ENCODE measurements at regions of chr15 and their contacts with region 1.

Region 1: DNA sequence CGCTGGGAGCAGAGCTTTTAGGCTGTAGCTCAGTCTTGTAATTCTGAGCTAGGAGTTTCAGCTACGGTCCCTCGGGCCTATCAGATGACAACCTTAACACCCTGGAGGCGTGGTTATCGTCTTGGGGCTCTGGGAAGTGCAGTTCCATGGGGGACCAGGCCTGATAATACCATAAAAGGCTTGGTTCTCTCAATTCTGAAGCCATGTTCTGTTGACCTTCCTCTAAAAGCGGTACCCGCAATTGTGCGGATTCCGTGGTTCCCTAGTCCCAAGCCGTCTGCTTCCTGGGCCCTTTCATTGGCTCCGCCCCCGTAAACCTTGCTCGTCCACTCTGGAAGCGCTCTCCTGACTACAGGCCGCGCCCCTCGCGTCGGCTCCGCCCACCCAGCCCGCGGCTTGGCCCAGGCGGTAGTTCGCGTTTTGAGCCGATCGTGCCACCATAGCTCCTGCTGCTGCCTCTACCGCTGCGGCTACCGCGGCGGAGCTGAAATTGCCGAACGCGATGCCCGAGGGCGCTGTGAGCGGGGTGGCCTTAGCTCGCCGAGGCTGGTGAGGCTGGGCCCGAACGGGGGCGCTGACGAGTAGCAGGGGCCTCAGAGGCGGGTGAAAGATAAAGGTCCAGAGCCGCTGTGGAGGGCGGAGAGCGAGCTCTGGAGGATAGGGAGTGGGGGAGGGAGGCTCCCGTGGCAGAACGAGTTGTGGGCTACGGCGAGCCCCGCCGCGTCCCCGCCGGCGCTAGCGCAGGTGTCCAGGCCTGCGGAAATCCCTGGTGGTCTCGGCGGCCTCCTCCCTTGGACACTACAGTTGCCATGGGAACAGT is at the start of gene MAPKBP1:
- DNase-seq: peak; percentile 91
- H3K4me3 ChIP-seq: peak within 1 kb of the TSS; percentile 85
- H3K27me3 ChIP-seq: no peaks in the 10 kb centered on the region
- CTCF ChIP-seq: peak; percentile 89
- polyA plus RNA-seq, gene MAPKBP1: 4.8 and 8.3 TPM in 2 replicates

Region 2: GRCh38 chr15:41557673-41558399 is 216.4 kb before region 1 on chr15:
- CTCF ChIA-PET with region 1: interaction called, 11 read pairs
- POLR2A ChIA-PET with region 1: no interaction called
- DNase-seq: peak; percentile 9
- H3K4me3 ChIP-seq: no peak overlapping the region; the same call in 1 of the 2 replicates
- H3K27me3 ChIP-seq: no peaks in the 10 kb centered on the region
- CTCF ChIP-seq: peak; percentile 94

Region 3: GRCh38 chr15:41655716-41656115 is 118.6 kb before region 1 on chr15:
- CTCF ChIA-PET with region 1: no interaction called
- POLR2A ChIA-PET with region 1: no interaction called
- DNase-seq: no peak
- H3K4me3 ChIP-seq: no peak overlapping the region
- H3K27me3 ChIP-seq: no peaks in the 10 kb centered on the region; the same call in 1 of the 2 replicates
- CTCF ChIP-seq: no peak

Region 4: GRCh38 chr15:41795996-41796856 is 22.0 kb after region 1 on chr15:
- CTCF ChIA-PET with region 1: interaction called, 97 read pairs
- POLR2A ChIA-PET with region 1: interaction called, 3 read pairs
- DNase-seq: peak; percentile 81
- H3K4me3 ChIP-seq: no peak overlapping the region
- H3K27me3 ChIP-seq: no peaks in the 10 kb centered on the region
- CTCF ChIP-seq: no peak

Region 5: GRCh38 chr15:41820791-41821423 is 46.6 kb after region 1 on chr15:
- CTCF ChIA-PET with region 1: interaction called, 30 read pairs
- POLR2A ChIA-PET with region 1: no interaction called
- DNase-seq: no peak
- H3K4me3 ChIP-seq: no peak overlapping the region
- H3K27me3 ChIP-seq: no peaks in the 10 kb centered on the region
- CTCF ChIP-seq: no peak